ENCODE measurements at regions of chr19 and their contacts with region 1.

Region 1: DNA sequence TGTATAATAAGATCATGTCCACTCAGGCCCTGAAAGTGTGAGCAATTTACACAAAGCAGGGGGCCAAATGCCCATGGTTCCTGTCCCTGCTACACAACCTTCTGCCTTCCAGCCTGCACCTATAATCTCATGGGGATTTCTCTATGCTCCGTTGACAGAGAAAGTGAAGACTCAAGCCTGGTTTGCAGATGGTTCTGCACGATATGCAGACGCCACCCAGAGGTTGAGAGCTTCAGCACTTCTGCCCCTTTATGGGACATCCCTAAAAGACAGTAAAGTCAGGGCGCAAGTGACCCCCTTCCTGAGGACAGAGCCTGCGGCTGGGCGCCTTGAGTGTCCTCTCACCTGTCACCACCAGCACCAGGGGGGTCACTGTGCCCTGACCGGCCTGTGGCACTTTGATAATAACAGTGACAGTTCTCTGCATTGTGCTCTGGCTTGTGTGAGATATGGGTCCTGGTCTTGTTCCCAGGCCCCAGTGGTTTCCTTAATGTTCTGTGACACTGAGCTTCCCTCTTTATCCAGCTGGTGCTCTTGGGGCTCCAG is 15.1 kb downstream of the LILRA5 start:
- DNase-seq: no peak

Region 2: GRCh38 chr19:53824134-53824611 is 473.7 kb before region 1 on chr19 and contains the start of gene NLRP12:
- intact Hi-C with region 1: loop called in 1 of 2 experiments (anchors 5 kb)
- DNase-seq: no peak
- total RNA-seq, gene NLRP12: 1.8 to 2.0 TPM

Region 3: GRCh38 chr19:54203151-54203611 is 94.7 kb before region 1 on chr19:
- intact Hi-C with region 1: no loop called
- DNase-seq: peak; percentile 55

Region 4: DNA sequence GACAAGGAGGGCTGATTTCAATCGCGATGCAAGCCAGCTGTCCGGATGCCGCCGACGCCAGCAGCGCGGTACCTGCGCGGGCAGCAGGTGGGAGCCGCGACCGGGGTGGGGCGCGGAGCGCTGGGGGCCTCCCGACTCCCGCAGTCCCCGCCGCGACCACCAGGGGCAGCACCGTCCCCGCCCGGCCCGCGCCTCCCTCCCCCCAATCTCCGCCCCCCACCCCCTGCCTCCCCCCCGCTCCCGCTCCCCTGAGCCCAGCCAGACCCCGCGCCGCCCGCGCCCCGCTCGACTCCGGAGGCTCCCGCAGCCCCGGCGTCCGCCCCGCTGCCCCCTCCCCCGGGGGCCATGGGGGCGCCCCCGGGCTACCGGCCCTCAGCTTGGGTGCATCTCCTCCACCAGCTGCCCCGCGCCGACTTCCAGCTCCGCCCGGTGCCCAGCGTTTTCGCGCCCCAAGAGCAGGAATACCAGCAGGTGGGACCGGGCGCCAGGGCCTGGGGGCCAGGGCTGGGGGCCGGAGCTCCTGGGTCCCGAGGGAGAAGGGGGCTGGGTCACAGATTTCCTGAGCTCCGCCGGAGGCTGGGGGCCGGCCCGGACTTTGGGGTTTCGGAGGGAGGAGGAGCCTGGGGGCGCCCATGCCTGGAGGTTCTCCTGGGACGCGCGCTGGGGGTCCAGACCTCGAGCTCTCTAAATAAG is 117.5 kb after region 1 on chr19 and contains the start of gene TTYH1:
- intact Hi-C with region 1: no loop called
- DNase-seq: peak; percentile 34
- total RNA-seq, gene TTYH1: 0.60 to 1.4 TPM

Region 5: GRCh38 chr19:55476100-55476775 is 1178.4 kb after region 1 on chr19 and contains the start of gene ZNF628:
- intact Hi-C with region 1: loop called in 1 of 2 experiments (anchors 10 kb)
- DNase-seq: peak; percentile 100
- total RNA-seq, gene ZNF628: 5.7 to 7.9 TPM